Right ventricle myocardium inferior (tissue), 1 donor: ENCODE measurements at regions of chr11 and their contacts with region 1.

Region 1: GRCh38 chr11:42620796-42621195 is 691.0 kb upstream of the API5 start:
- DNase-seq: no peak
- ATAC-seq: no peak

Region 2: DNA sequence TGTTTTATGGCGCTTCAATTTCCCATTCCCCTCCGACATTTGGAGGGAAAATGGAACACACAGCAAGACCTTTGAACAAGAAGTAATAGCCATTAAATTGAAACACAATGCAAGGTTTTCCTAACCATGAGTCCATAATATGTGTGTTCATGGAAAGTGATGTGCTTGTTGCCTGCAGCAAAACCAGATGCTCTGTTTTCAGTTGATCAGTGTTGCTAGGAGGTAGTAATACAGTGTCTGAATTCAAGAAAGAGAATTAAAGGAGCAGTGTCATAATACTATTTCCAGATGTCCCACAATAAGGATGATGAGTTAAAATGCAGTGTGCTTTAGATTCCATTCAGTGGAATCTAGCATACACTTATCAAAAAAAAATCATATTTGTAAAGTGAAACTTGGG is 53.6 kb after region 1 on chr11:
- intact Hi-C with region 1: loop called (anchors 10 kb)
- DNase-seq: no peak
- ATAC-seq: no peak